CD14-positive monocyte (primary cell): ENCODE measurements at regions of chr6 and their contacts with region 1.

Region 1: DNA sequence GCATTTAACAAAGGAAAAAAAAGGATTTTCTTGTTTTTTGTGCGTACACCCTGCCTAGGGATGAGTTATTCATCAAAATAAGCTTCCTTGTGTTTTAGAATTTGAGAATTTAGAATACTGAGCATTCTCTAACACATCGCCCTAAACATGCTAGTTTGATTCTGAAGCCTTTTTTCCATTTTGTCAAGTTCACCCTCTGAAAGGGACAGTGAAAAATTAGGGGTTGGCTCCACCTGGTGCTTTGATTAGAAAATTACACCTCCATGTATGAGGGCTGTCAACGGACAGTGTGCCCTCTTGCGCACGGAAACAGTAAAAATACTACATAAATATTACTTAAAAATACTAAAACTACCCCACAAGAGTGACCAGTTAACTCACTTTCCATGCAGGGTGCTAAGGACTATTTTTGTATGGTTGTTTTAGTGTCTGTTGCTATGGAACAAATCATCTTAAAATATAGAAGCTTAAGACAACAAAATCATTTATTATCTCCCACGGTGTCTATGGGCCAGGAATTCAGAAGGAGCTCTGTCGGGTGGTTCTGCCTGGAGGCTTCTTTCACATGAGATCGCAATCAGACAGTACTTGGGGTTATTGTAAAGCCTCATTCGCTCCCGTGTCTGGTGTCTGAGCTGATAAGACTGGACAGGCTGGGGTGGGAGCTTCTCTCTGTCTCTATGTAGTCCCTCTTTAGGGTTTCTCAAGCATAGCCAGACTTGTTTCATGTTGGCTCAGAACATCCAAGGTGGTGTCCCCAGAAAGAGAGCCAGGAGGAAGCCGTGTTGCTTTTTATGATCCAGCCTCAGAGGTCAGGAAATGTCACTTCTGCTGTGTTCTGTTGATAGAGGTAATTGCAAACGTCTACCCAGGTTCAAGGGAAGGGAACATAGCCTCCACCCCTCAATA is 41.1 kb upstream of the TMEM170B start:
- DNase-seq: peak; percentile 72 to 82 (median 80)
- H3K4me3 ChIP-seq: peak overlapping the region; percentile 19 to 65 (median 47)
- H3K4me3 Mint-ChIP-seq: peak overlapping the region; percentile 68 to 83
- H3K27ac ChIP-seq: peak overlapping the region; percentile 89 to 95
- H3K27ac Mint-ChIP-seq: peak overlapping the region; percentile 95 to 100 (median 99)
- H3K4me1 ChIP-seq: peaks cover 35 to 42% of the 10 kb centered on the region in 2 donors
- H3K4me1 Mint-ChIP-seq: peaks cover 29% of the 10 kb centered on the region
- H3K27me3 ChIP-seq: no peaks in the 10 kb centered on the region
- H3K27me3 Mint-ChIP-seq: peaks cover 0 to 3% (median 0%) of the 10 kb centered on the region in 3 donors
- CTCF ChIP-seq: peak; percentile 93

Region 2: DNA sequence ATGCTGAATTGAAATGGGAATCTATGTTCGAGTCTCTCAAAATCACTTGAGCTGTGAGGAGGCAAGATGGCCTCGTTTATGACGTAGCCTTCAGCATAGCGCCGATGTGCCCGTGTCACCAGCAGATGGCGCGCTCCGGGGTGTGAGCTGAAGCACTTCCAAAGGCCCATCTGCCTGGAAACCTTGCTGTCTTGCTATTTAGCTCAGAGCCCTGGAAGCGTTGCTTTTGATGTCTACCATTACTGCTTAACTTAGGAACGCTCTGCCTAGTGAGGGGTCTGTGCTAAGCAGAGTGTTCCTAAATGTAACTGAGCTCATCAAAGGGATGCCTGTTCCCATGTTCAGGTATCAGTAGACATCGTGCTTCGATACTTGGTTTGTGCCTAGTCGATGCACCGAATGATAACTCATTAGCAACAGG is 541.8 kb before region 1 on chr6:
- intact Hi-C with region 1: loop called in 1 of 2 experiments (anchors 10 kb)
- DNase-seq: peak; percentile 36 to 55 (median 49)
- H3K4me3 ChIP-seq: no peak overlapping the region
- H3K4me3 Mint-ChIP-seq: no peak overlapping the region
- H3K27ac ChIP-seq: no peak overlapping the region
- H3K27ac Mint-ChIP-seq: no peak overlapping the region
- H3K4me1 ChIP-seq: no peaks in the 10 kb centered on the region
- H3K4me1 Mint-ChIP-seq: no peaks in the 10 kb centered on the region
- H3K27me3 ChIP-seq: no peaks in the 10 kb centered on the region
- H3K27me3 Mint-ChIP-seq: peaks cover 0 to 4% (median 0%) of the 10 kb centered on the region in 3 donors
- CTCF ChIP-seq: peak; percentile 85

Region 3: GRCh38 chr6:11172501-11173332 is 323.7 kb before region 1 on chr6:
- intact Hi-C with region 1: loop called (anchors 2 kb)
- DNase-seq: peak; percentile 46 to 62 (median 54)
- H3K4me3 ChIP-seq: no peak overlapping the region
- H3K4me3 Mint-ChIP-seq: peak overlapping the region in 1 of 2 donors; percentile 43
- H3K27ac ChIP-seq: no peak overlapping the region
- H3K27ac Mint-ChIP-seq: peak overlapping the region in 3 of 7 donors; percentile 9 to 52 (median 50)
- H3K4me1 ChIP-seq: peaks cover 8 to 11% of the 10 kb centered on the region in 2 donors
- H3K4me1 Mint-ChIP-seq: peaks cover 19% of the 10 kb centered on the region
- H3K27me3 ChIP-seq: no peaks in the 10 kb centered on the region
- H3K27me3 Mint-ChIP-seq: peaks cover 1 to 6% (median 2%) of the 10 kb centered on the region in 3 donors
- CTCF ChIP-seq: peak; percentile 91

Region 4: DNA sequence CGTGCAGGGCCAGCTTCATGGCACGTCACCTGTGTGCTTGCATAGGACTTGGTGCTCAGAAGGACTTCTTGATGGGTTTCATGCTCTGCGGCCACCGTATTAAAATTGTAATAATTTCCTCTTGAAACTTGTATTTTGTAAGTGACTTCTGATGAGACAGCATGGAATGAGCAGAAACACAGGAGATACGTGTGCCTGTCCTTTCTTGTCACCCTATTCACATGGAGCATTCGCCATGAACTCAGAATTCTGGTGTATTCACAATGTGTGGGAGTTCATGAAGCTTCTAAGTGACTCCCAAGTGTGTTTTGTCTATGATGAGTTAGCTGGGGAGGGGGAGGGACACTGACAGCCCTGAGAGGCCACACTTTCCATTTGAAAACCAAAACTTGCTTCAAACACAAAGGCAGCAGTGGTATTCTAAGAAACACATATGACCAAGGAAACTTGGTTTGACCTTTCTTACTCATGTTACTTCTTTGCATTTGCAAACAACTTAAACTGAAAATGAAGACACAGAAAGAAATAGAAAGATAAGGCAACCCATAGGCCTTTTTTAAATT is 171.9 kb before region 1 on chr6:
- intact Hi-C with region 1: loop called in 1 of 2 experiments (anchors 10 kb)
- DNase-seq: no peak
- H3K4me3 ChIP-seq: peak overlapping the region in 1 of 3 experiments; percentile 42
- H3K4me3 Mint-ChIP-seq: peak overlapping the region; percentile 53 to 65
- H3K27ac ChIP-seq: peak overlapping the region; percentile 97 to 98
- H3K27ac Mint-ChIP-seq: peak overlapping the region; percentile 98 to 100 (median 99)
- H3K4me1 ChIP-seq: peaks cover 39 to 45% of the 10 kb centered on the region in 2 donors
- H3K4me1 Mint-ChIP-seq: peaks cover 60% of the 10 kb centered on the region
- H3K27me3 ChIP-seq: no peaks in the 10 kb centered on the region
- H3K27me3 Mint-ChIP-seq: peaks cover 1 to 2% (median 2%) of the 10 kb centered on the region in 3 donors
- CTCF ChIP-seq: no peak

Region 5: DNA sequence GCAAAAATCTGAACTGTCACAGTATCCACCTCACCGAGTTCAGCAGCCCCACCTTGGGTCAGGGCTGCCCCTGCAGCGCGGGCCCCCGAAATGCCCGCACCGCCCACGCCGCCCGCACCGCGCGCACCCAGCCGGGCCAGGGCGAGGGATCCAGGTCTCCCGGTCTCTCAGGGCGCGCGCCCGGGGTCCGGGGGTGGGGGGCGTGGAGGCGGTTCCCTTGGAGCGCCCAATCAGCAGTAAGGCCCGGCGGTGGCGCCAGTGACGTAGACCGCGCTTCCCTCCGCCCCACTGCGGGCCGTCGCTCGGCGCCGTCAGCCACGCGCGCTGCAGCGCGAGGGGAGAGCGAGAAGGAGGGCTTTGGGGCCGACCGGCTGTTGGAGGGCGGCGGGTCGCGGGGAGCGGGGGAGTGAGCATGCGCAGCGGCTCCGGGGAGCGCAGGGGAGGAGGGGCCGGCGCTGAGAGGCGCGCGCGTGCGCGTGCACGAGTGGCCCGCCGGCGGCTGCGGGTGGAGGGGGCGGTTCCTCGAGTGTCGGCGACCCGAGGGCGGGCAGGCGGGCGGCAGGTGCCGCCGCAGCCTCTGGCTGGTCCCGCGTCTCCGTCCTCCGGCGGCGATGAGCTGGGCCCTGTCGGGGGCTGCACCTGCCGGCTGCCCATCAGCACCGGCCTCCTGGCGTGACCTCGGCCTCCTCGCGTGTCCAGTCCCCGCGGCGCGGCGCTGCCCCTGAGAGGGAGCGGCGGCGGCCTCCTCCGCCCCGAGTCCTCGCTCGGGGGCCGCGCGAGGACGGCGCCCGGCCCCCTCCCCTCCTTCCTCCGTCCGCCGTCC is 41.0 kb after region 1 on chr6 and contains the start of gene TMEM170B:
- intact Hi-C with region 1: loop called (anchors 5 kb)
- DNase-seq: peak; percentile 94 to 97 (median 96)
- H3K4me3 ChIP-seq: peak within 1 kb of the TSS; percentile 94 to 100 (median 95)
- H3K4me3 Mint-ChIP-seq: peak within 1 kb of the TSS; percentile 88 to 97
- H3K27ac ChIP-seq: peak within 1 kb of the TSS; percentile 91 to 93
- H3K27ac Mint-ChIP-seq: peak within 1 kb of the TSS; percentile 95 to 99 (median 97)
- H3K4me1 ChIP-seq: peaks cover 41 to 50% of the 10 kb centered on the region in 2 donors
- H3K4me1 Mint-ChIP-seq: peaks cover 46% of the 10 kb centered on the region
- H3K27me3 ChIP-seq: no peaks in the 10 kb centered on the region
- H3K27me3 Mint-ChIP-seq: peaks cover 0 to 2% (median 0%) of the 10 kb centered on the region in 3 donors
- CTCF ChIP-seq: no peak
- polyA plus RNA-seq, gene TMEM170B: 11.7 to 33.4 (median 19.7) TPM